ENCODE measurements at regions of chr12 and their contacts with region 1.

Region 1: DNA sequence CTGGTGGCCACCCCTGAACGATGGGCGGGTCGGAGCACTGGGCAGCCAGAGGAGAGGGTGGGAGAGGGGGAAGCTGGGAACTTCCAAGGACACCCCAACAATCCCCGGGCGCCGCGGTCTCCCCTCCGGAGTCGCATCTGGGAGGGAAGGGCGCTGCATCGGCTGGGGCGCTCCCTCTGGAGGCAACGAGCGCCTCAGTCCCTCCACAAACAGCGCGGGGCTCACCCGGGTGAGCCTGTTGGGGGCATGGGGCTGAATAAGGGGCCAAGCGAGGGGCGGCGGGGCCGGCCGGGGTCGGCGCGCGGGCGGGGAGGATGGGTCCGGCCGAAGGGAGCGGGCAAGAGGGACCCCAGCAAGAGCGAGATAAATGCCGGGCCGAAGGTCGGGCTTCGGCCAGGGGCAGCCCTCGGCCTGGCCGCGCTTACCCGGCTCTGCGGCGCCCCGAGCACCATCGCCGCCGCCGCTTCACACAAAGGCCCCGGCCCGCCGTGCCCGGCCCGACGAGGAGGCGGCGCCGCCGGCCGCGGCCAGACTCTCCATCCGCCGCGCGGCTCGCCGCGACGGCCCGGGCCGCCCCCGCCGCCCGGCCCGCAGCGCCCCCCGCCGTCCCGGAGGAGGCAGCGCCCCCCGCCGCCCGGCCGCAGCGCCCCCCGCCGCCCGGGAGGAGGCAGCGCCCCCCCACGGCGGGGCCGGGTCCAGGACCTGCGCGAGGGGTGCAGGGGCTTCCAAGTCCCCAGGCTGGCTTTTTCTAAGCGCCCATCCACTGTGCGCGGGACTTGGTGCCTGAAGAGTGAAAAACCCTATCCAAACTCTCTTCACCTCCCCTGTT is at the start of gene ZBTB39:
- DNase-seq: peak; percentile 74 to 96 (median 96)
- ATAC-seq: peak; percentile 83
- H3K4me3 ChIP-seq: peak within 1 kb of the TSS; percentile 94
- H3K27ac ChIP-seq: peak within 1 kb of the TSS; percentile 62
- H3K4me1 ChIP-seq: peaks cover 19 to 41% of the 10 kb centered on the region in 2 experiments; a peak in 4 of 5 replicates
- H3K27me3 ChIP-seq: no peaks in the 10 kb centered on the region
- CTCF ChIP-seq: peak; percentile 62 to 95 (median 73)
- EP300 ChIP-seq: no peak
- POLR2A ChIP-seq: 0 out of 2 replicates have a peak, but pooled peaks have one; percentile 45
- RAD21 ChIP-seq: 0 out of 4 replicates have a peak, but pooled peaks of 1 of the 2 experiments have one; percentile 8
- polyA plus RNA-seq, gene ZBTB39: 3.3 to 3.4 TPM

Region 2: GRCh38 chr12:56751712-56752598 is 254.2 kb before region 1 on chr12 and contains the start of gene PRIM1:
- CTCF ChIA-PET with region 1: interaction called, 10 read pairs
- POLR2A ChIA-PET with region 1: interaction called, 4 read pairs
- in situ Hi-C with region 1: loop called (anchors 5 kb)
- intact Hi-C with region 1: loop called (anchors 1 kb)
- DNase-seq: peak; percentile 90 to 96 (median 93)
- ATAC-seq: peak; percentile 90
- H3K4me3 ChIP-seq: peak within 1 kb of the TSS; percentile 72
- H3K27ac ChIP-seq: peak within 1 kb of the TSS; percentile 97
- H3K4me1 ChIP-seq: peaks cover 11 to 16% of the 10 kb centered on the region in 2 experiments; a peak in 4 of 5 replicates
- H3K27me3 ChIP-seq: no peaks in the 10 kb centered on the region
- CTCF ChIP-seq: no peak
- EP300 ChIP-seq: no peak
- POLR2A ChIP-seq: peak; percentile 94
- RAD21 ChIP-seq: no peak
- polyA plus RNA-seq, gene PRIM1: 175 to 179 TPM

Region 3: GRCh38 chr12:56839915-56840325 is 166.3 kb before region 1 on chr12:
- CTCF ChIA-PET with region 1: interaction called, 30 read pairs
- POLR2A ChIA-PET with region 1: interaction called, 5 read pairs
- in situ Hi-C with region 1: loop called (anchors 5 kb)
- intact Hi-C with region 1: loop called (anchors 1 kb)
- DNase-seq: peak; percentile 55 to 83 (median 68)
- ATAC-seq: peak; percentile 95
- H3K4me3 ChIP-seq: no peak overlapping the region
- H3K27ac ChIP-seq: no peak overlapping the region
- H3K4me1 ChIP-seq: peaks cover 3 to 7% of the 10 kb centered on the region in 2 experiments; a peak in 4 of 5 replicates
- H3K27me3 ChIP-seq: no peaks in the 10 kb centered on the region
- CTCF ChIP-seq: peak; percentile 92 to 97 (median 97)
- EP300 ChIP-seq: no peak; the same call in 1 of the 2 replicates
- POLR2A ChIP-seq: no peak
- RAD21 ChIP-seq: peak; percentile 99

Region 4: GRCh38 chr12:56987551-56988053 is 18.6 kb before region 1 on chr12:
- CTCF ChIA-PET with region 1: interaction called, 3 read pairs
- POLR2A ChIA-PET with region 1: interaction called, 23 read pairs
- in situ Hi-C with region 1: no loop called
- intact Hi-C with region 1: loop called (anchors 1 kb)
- DNase-seq: peak; percentile 81 to 91 (median 82)
- ATAC-seq: peak; percentile 82
- H3K4me3 ChIP-seq: peak overlapping the region; percentile 3; the same call in 1 of the 2 replicates
- H3K27ac ChIP-seq: peak overlapping the region; percentile 62
- H3K4me1 ChIP-seq: peaks cover 29 to 54% of the 10 kb centered on the region in 2 experiments
- H3K27me3 ChIP-seq: no peaks in the 10 kb centered on the region
- CTCF ChIP-seq: peak; percentile 91 to 96 (median 93)
- EP300 ChIP-seq: no peak
- POLR2A ChIP-seq: no peak
- RAD21 ChIP-seq: peak; percentile 97 to 99

Region 5: GRCh38 chr12:57111031-57111734 is 105.0 kb after region 1 on chr12 and contains the start of gene STAT6:
- CTCF ChIA-PET with region 1: interaction called, 13 read pairs
- POLR2A ChIA-PET with region 1: interaction called, 8 read pairs
- in situ Hi-C with region 1: loop called (anchors 5 kb)
- intact Hi-C with region 1: loop called (anchors 1 kb)
- DNase-seq: peak; percentile 66 to 86 (median 70)
- ATAC-seq: peak; percentile 81
- H3K4me3 ChIP-seq: peak within 1 kb of the TSS; percentile 48
- H3K27ac ChIP-seq: peak within 1 kb of the TSS; percentile 91
- H3K4me1 ChIP-seq: peaks cover 23 to 30% of the 10 kb centered on the region in 2 experiments; a peak in 4 of 5 replicates
- H3K27me3 ChIP-seq: no peaks in the 10 kb centered on the region
- CTCF ChIP-seq: no peak
- EP300 ChIP-seq: 0 out of 2 replicates have a peak, but pooled peaks have one; percentile 10
- POLR2A ChIP-seq: peak; percentile 85
- RAD21 ChIP-seq: no peak; a peak in 1 of 4 replicates
- polyA plus RNA-seq, gene STAT6: 2.4 to 4.3 TPM

Region 6: DNA sequence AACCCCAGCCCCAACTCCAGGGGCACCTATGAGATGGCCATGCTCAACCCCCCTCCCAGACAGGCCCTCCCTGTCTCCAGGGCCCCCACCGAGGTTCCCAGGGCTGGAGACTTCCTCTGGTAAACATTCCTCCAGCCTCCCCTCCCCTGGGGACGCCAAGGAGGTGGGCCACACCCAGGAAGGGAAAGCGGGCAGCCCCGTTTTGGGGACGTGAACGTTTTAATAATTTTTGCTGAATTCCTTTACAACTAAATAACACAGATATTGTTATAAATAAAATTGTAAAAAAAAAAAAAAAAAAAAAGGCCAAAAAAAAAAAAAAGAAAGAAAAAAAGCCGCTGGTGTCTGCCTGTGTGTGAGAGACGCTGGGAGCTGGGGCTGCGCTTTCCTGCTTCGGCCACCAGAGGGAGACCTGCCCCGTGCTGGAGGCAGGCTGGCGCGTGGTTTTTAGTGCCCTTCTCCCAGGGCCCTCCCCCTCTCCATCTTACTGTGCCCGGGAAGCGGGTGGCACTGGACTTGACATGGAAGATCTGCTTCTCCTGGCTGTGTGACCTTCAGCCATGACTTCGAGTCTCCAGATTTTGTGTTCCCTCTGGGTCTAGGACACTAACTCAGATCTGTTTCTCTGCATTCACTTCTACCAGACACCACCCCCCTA is 207.0 kb after region 1 on chr12:
- CTCF ChIA-PET with region 1: no interaction called
- POLR2A ChIA-PET with region 1: no interaction called
- in situ Hi-C with region 1: no loop called
- intact Hi-C with region 1: no loop called
- DNase-seq: peak; percentile 84 to 94 (median 90)
- ATAC-seq: peak; percentile 81
- H3K4me3 ChIP-seq: no peak overlapping the region
- H3K27ac ChIP-seq: no peak overlapping the region
- H3K4me1 ChIP-seq: peaks cover 17 to 56% of the 10 kb centered on the region in 2 experiments; a peak in 4 of 5 replicates
- H3K27me3 ChIP-seq: peaks cover 24 to 71% of the 10 kb centered on the region in 2 experiments; a peak in 4 of 5 replicates
- CTCF ChIP-seq: peak; percentile 89 to 97 (median 92)
- EP300 ChIP-seq: no peak
- POLR2A ChIP-seq: no peak
- RAD21 ChIP-seq: peak; percentile 78 to 85